Colonic mucosa (tissue), 4 donors: ENCODE measurements at regions of chr16 and their contacts with region 1.

Region 1: DNA sequence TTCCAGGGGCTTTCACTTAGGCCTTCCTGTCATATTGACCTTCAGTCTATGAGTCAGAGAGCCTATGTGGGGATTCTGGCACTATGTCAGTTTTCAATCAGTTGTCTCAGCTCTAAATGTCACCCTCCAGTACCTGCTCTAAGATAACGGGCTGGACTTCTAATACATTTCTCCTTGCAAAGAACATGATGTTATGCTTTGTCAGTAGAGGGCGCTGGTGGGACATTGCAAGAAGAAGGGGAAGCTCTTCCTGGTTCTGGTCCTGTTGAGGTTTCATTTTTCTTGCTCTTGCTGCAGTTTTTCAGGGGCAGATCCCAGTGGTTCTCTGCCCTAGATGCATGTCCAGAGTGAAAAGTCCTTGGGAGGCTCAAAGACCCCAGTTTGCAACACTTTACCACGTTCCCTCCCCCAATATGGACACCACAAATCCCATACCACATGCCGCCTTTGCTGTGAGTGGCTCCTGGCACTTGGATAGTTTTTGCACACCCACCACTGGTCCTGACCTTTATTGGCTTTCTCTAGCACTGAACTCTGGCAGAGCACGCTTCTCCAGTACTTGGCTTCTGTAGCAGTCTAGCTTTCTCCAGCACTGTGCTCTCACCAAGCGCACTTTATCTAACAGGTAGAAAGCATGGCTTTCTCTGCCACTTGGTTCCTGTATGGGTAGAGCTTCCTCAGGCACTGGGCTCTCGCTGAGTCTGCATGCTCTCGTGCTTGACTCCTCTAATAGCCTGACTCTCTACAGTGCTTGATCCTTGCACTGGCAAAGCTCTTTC is 49.0 kb downstream of the BCL7C start:
- DNase-seq: peak; percentile 91
- H3K4me3 ChIP-seq: no peak overlapping the region
- H3K27ac ChIP-seq: peak overlapping the region; percentile 15
- H3K4me1 ChIP-seq: peaks cover 12% of the 10 kb centered on the region
- H3K27me3 ChIP-seq: no peaks in the 10 kb centered on the region
- CTCF ChIP-seq: peak; percentile 75

Region 2: GRCh38 chr16:30893744-30894539 is 49.1 kb after region 1 on chr16 and contains the start of gene BCL7C:
- intact Hi-C with region 1: no loop called
- DNase-seq: peak; percentile 95
- H3K4me3 ChIP-seq: peak within 1 kb of the TSS; percentile 85
- H3K27ac ChIP-seq: peak within 1 kb of the TSS; percentile 85
- H3K4me1 ChIP-seq: peaks cover 9% of the 10 kb centered on the region
- H3K27me3 ChIP-seq: no peaks in the 10 kb centered on the region
- CTCF ChIP-seq: no peak
- total RNA-seq, gene BCL7C: 19.9 to 34.5 TPM

Region 3: DNA sequence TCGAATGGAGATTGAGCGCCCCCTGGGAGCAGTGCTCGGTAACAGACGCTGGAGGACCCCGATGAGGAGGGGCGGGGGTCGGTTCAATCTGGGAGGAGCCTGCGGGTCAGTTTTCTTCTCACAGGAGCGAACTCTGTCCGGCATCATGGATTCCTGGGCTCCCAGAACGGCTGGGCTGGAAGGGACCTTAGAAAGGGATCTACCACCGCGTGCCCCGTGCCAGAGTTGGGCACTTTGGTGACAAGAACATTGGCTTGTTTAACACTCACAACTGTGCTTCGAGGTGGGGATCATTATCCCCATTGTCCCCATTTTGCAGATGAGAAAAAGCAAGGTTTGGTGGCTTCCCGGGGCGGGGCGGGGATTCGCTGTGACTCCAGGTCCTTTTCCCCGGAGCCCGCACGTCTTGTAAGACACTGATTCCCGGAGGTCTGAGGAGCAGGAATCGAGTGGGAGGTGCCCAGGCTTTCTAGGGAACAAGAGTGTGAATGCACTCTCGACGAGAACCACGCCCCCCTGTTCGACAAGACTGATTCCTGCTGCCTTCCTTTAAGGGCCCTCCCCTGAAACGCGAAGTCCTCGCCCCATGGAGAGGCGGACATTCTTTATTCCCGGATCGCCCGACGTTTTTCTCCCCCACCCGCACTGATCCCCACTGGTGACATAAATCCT is 77.0 kb after region 1 on chr16:
- intact Hi-C with region 1: loop called (anchors 2 kb)
- DNase-seq: peak; percentile 93
- H3K4me3 ChIP-seq: peak overlapping the region; percentile 47
- H3K27ac ChIP-seq: peak overlapping the region; percentile 91
- H3K4me1 ChIP-seq: no peaks in the 10 kb centered on the region
- H3K27me3 ChIP-seq: no peaks in the 10 kb centered on the region
- CTCF ChIP-seq: peak; percentile 91